MCF 10A (cell line): ENCODE measurements at regions of chr1 and their contacts with region 1.

Region 1: GRCh38 chr1:219066631-219067349 is 106.9 kb upstream of the LYPLAL1 start:
- DNase-seq: peak; percentile 65
- H3K4me3 Mint-ChIP-seq: no peak overlapping the region
- H3K27ac Mint-ChIP-seq: no peak overlapping the region
- H3K4me1 Mint-ChIP-seq: peaks cover 6% of the 10 kb centered on the region
- H3K27me3 Mint-ChIP-seq: no peaks in the 10 kb centered on the region
- CTCF ChIP-seq: peak; percentile 90

Region 2: DNA sequence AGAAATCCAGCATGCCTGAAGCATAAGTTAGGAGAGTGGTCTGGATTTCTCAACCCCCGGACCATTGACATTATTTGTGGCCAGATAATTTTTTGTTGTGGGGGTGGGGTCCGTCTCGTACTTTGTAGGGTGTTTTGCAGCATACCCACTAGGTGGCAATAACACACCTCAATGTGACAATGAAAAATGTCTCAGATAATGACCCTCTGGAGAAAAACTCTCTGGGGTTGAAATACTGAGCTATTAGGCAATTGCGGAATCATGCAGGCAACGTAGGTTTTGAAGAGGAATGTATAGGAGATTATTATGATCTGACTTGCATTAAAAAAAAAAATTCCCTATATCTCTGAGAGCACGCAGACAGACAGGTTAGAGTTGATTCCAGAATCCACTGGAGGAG is 807.0 kb before region 1 on chr1:
- CTCF ChIA-PET with region 1: interaction called, 9 read pairs
- POLR2A ChIA-PET with region 1: no interaction called
- intact Hi-C with region 1: loop called (anchors 1 kb)
- DNase-seq: peak; percentile 68
- H3K4me3 Mint-ChIP-seq: no peak overlapping the region
- H3K27ac Mint-ChIP-seq: no peak overlapping the region
- H3K4me1 Mint-ChIP-seq: no peaks in the 10 kb centered on the region
- H3K27me3 Mint-ChIP-seq: peaks cover 84% of the 10 kb centered on the region
- CTCF ChIP-seq: peak; percentile 68

Region 3: GRCh38 chr1:218339267-218339831 is 727.4 kb before region 1 on chr1:
- CTCF ChIA-PET with region 1: interaction called, 71 read pairs
- POLR2A ChIA-PET with region 1: interaction called, 13 read pairs
- intact Hi-C with region 1: loop called (anchors 1 kb)
- DNase-seq: peak; percentile 71
- H3K4me3 Mint-ChIP-seq: no peak overlapping the region
- H3K27ac Mint-ChIP-seq: no peak overlapping the region
- H3K4me1 Mint-ChIP-seq: no peaks in the 10 kb centered on the region
- H3K27me3 Mint-ChIP-seq: no peaks in the 10 kb centered on the region
- CTCF ChIP-seq: peak; percentile 90

Region 4: GRCh38 chr1:218546309-218546708 is 520.5 kb before region 1 on chr1:
- CTCF ChIA-PET with region 1: interaction called, 7 read pairs
- POLR2A ChIA-PET with region 1: no interaction called
- intact Hi-C with region 1: loop called (anchors 1 kb)
- DNase-seq: peak; percentile 42
- H3K4me3 Mint-ChIP-seq: no peak overlapping the region
- H3K27ac Mint-ChIP-seq: no peak overlapping the region
- H3K4me1 Mint-ChIP-seq: no peaks in the 10 kb centered on the region
- H3K27me3 Mint-ChIP-seq: no peaks in the 10 kb centered on the region
- CTCF ChIP-seq: peak; percentile 46

Region 5: DNA sequence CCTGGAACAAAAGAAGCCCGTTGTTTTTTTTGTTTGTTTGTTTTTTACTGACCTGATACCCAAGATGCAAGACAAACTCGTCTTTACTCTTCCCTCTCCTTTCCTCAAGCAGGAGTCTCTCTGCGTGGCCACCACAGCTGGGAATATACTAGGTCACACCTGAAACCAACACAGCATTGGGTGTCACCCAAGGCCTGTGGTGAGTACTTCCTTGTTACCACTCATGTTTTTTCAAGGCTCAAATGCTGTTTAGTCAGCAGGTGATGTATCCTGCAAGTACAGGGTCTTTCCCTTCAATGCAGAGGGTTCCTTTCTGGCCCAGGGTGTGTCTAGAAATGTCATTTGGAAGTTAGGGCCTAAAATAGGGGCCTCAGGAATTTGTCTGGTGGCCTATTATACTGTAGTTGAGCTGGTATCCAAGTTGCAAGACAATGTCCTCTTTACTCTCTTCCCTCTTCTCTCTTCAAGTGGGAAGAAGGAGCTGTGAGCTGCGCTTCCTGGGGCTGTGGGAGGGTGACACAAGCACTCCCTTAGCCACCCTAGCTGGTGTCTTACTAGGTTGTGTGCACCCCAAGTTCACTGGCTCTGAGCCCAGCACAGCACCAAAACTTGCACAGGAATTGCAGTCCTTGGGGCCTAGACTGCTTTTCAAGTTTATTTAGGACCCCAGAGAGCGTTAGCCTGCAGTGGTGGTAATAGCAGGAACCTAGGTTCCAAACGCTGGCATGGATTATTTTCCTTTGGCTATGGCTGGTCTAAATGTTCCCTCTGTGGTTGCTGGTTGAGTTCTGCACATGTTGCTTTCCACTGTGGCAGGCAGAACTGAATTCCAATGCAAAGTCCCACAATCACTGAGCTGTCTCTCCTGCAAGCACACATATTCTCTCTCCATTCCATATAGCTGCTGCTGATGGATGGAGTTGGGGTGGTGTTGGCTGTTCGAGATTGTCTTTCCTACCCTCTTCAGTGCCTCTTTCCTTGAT is 15.4 kb after region 1 on chr1:
- CTCF ChIA-PET with region 1: interaction called, 41 read pairs
- POLR2A ChIA-PET with region 1: interaction called, 3 read pairs
- intact Hi-C with region 1: no loop called
- DNase-seq: no peak
- H3K4me3 Mint-ChIP-seq: no peak overlapping the region
- H3K27ac Mint-ChIP-seq: no peak overlapping the region
- H3K4me1 Mint-ChIP-seq: peaks cover 5% of the 10 kb centered on the region
- H3K27me3 Mint-ChIP-seq: no peaks in the 10 kb centered on the region
- CTCF ChIP-seq: no peak

Region 6: DNA sequence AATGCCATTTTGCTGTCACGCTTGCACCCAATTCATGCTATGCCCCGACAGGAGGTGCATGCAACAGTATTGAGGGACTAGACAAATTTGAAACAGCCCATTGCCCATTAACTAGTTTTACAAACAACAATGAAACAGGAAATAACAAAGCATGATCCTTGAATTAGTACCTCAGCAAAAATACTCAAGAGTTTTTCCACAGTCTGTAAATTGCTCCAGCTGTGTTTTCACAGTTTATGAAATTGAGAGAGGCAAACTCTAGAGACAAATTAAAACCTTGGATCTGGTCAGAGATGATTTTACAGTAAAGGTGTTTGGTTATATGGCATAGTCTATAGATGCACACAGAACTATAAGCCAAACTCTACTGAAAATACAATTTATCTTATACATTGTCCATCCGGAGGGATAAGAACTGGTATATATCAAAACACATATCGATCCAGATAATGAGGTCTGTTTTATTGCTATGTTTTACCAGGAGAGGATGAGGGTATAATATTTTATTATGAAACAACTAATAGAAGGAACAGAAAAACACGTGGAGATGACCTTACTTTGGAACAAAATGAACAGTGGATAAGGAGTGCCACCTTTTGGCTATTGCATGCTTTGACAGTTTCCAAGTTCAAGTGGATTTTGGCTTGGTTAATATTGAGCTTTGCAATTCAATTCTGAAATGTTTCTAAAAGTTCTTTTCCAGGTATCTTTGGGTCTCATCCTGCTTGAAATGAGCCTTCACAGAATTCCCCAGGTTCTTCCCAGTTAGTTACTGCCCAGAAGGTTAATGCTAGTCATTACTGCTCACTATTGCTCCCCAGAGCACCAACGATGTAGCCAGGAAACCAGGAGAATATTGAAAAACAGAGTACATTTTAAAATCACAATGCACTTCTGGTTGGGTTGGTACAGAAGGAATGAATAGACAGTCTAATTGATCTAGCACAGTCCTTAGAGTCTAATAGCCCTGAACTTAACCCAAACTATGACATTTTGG is 500.5 kb after region 1 on chr1:
- CTCF ChIA-PET with region 1: interaction called, 3 read pairs
- POLR2A ChIA-PET with region 1: no interaction called
- intact Hi-C with region 1: loop called (anchors 10 kb)
- DNase-seq: peak; percentile 78
- H3K4me3 Mint-ChIP-seq: no peak overlapping the region
- H3K27ac Mint-ChIP-seq: no peak overlapping the region
- H3K4me1 Mint-ChIP-seq: no peaks in the 10 kb centered on the region
- H3K27me3 Mint-ChIP-seq: peaks cover 91% of the 10 kb centered on the region
- CTCF ChIP-seq: peak; percentile 85